T-cell (primary cell): ENCODE measurements at regions of chr2 and their contacts with region 1.

Region 1: DNA sequence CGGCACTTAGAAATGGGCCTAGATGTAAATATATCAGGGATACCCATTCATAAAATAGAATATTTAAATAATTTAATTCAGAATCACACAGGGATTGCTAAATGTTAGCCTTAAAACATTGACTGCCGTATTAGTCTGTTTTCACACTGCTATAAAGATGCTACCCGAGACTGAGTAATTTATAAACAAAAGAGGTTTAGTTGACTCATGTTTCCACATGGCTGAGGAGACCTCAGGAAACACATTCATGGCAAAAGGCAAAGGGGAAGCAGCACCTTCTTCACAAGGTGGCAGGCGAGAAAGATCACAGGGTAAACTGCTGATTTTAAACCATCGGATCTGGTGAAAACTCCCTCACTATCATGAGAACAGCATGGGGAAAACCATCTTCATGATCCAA is 223.6 kb upstream of the GULP1 start:
- DNase-seq: no peak
- ATAC-seq: no peak
- H3K4me3 ChIP-seq: no peak overlapping the region
- H3K4me3 Mint-ChIP-seq: no peak overlapping the region
- H3K27ac ChIP-seq: no peak overlapping the region
- H3K27ac Mint-ChIP-seq: no peak overlapping the region
- H3K4me1 ChIP-seq: no peaks in the 10 kb centered on the region
- H3K4me1 Mint-ChIP-seq: no peaks in the 10 kb centered on the region
- H3K27me3 ChIP-seq: no peaks in the 10 kb centered on the region
- H3K27me3 Mint-ChIP-seq: no peaks in the 10 kb centered on the region

Region 2: DNA sequence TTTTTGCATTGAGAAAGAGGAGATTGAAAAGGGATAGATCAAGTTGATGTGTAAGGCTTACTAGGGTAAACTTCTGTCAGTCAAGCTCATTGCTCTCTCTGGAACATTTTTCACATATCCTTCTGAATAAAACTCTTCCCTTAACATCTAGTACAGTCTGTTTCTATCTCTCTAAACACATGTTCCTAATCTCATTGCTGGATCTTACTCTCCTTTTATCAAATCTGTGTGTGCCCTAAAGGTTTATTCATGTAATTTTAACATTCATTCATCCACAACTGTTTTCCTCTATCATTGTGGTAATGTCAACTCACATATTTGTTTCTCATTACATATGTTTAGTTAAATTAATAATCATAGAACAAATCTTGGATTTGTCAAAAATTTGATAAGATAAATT is 54.3 kb before region 1 on chr2:
- CTCF ChIA-PET with region 1: no interaction called
- POLR2A ChIA-PET with region 1: no interaction called
- DNase-seq: no peak
- ATAC-seq: no peak
- H3K4me3 ChIP-seq: no peak overlapping the region
- H3K4me3 Mint-ChIP-seq: no peak overlapping the region
- H3K27ac ChIP-seq: no peak overlapping the region
- H3K27ac Mint-ChIP-seq: no peak overlapping the region
- H3K4me1 ChIP-seq: no peaks in the 10 kb centered on the region
- H3K4me1 Mint-ChIP-seq: no peaks in the 10 kb centered on the region
- H3K27me3 ChIP-seq: no peaks in the 10 kb centered on the region
- H3K27me3 Mint-ChIP-seq: no peaks in the 10 kb centered on the region

Region 3: DNA sequence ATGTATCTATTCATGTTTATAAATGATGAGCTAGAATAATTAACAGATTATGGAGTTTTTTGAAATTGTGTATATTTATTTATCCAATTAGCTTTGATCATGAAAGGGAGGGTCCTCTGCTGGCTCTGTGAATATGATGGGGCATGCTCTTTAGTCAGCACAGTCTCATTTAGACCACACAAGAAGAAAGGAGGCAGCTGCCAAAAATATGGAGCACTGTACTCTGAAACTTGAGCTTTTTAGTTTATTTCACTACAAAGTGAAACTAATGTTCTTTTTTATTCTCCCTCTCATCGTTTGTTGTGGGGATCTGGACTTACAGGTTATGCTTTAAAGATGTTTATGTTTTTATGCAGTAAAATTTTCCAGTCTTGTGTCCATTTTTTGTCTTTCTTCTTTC is 43.3 kb before region 1 on chr2:
- CTCF ChIA-PET with region 1: no interaction called
- POLR2A ChIA-PET with region 1: no interaction called
- DNase-seq: no peak
- ATAC-seq: no peak
- H3K4me3 ChIP-seq: no peak overlapping the region
- H3K4me3 Mint-ChIP-seq: no peak overlapping the region
- H3K27ac ChIP-seq: no peak overlapping the region
- H3K27ac Mint-ChIP-seq: no peak overlapping the region
- H3K4me1 ChIP-seq: no peaks in the 10 kb centered on the region
- H3K4me1 Mint-ChIP-seq: no peaks in the 10 kb centered on the region
- H3K27me3 ChIP-seq: no peaks in the 10 kb centered on the region
- H3K27me3 Mint-ChIP-seq: peaks cover 0 to 7% of the 10 kb centered on the region in 2 donors

Region 4: GRCh38 chr2:188045016-188045415 is 23.1 kb before region 1 on chr2:
- CTCF ChIA-PET with region 1: interaction called in 1 of 2 experiments, 10 read pairs
- POLR2A ChIA-PET with region 1: no interaction called
- DNase-seq: no peak
- ATAC-seq: no peak
- H3K4me3 ChIP-seq: no peak overlapping the region
- H3K4me3 Mint-ChIP-seq: no peak overlapping the region
- H3K27ac ChIP-seq: no peak overlapping the region
- H3K27ac Mint-ChIP-seq: no peak overlapping the region
- H3K4me1 ChIP-seq: no peaks in the 10 kb centered on the region
- H3K4me1 Mint-ChIP-seq: no peaks in the 10 kb centered on the region
- H3K27me3 ChIP-seq: no peaks in the 10 kb centered on the region
- H3K27me3 Mint-ChIP-seq: no peaks in the 10 kb centered on the region

Region 5: DNA sequence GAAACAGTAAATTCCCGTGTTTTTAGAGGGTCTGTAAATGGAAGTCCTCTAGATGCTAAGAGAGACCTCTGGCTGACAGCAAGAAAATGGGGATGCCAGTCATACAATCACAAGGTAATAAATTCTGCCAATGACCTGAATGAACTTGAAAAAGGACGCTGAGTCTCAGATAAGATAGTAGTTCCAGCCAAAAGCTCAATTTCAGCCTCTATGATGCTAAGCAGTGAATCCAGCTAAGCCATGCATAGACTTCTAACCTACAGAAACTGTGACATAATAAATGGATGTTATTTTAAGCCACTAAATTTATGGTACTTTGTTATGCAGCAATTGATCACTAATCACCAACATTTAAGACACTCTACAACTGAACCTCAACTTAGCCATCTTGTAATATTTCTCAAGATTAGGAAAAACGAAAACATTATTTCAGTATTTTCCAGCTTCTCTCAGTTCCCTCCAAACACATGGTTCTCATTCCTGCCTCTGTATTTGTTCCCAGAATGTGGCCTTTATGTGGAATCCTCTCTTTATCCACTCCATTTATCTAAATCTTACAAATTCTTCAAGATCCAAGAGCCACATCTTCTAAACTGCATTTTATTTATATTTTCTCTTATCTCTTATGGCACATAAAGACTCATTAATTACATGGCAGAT is 554.6 kb after region 1 on chr2:
- CTCF ChIA-PET with region 1: no interaction called
- POLR2A ChIA-PET with region 1: interaction called in 1 of 2 experiments, 11 read pairs
- DNase-seq: no peak
- ATAC-seq: no peak
- H3K4me3 ChIP-seq: no peak overlapping the region
- H3K4me3 Mint-ChIP-seq: no peak overlapping the region
- H3K27ac ChIP-seq: no peak overlapping the region
- H3K27ac Mint-ChIP-seq: no peak overlapping the region
- H3K4me1 ChIP-seq: no peaks in the 10 kb centered on the region
- H3K4me1 Mint-ChIP-seq: no peaks in the 10 kb centered on the region
- H3K27me3 ChIP-seq: no peaks in the 10 kb centered on the region
- H3K27me3 Mint-ChIP-seq: no peaks in the 10 kb centered on the region